ENCODE measurements at regions of chr7 and their contacts with region 1.

Region 1: GRCh38 chr7:90430614-90431471 is 27.6 kb downstream of the CLDN12 start:
- DNase-seq: no peak
- ATAC-seq: no peak
- H3K4me3 ChIP-seq: no peak overlapping the region
- H3K27ac ChIP-seq: no peak overlapping the region
- H3K4me1 ChIP-seq: no peaks in the 10 kb centered on the region
- H3K27me3 ChIP-seq: no peaks in the 10 kb centered on the region
- CTCF ChIP-seq: no peak
- POLR2A ChIP-seq: no peak

Region 2: GRCh38 chr7:88789480-88790064 is 1641.3 kb before region 1 on chr7:
- intact Hi-C with region 1: loop called in 1 of 10 experiments (anchors 10 kb)
- DNase-seq: no peak
- ATAC-seq: no peak
- H3K4me3 ChIP-seq: no peak overlapping the region
- H3K27ac ChIP-seq: no peak overlapping the region
- H3K4me1 ChIP-seq: no peaks in the 10 kb centered on the region
- H3K27me3 ChIP-seq: no peaks in the 10 kb centered on the region
- CTCF ChIP-seq: peak in 11 of 12 donors; percentile 27 to 60 (median 44)
- POLR2A ChIP-seq: no peak

Region 3: DNA sequence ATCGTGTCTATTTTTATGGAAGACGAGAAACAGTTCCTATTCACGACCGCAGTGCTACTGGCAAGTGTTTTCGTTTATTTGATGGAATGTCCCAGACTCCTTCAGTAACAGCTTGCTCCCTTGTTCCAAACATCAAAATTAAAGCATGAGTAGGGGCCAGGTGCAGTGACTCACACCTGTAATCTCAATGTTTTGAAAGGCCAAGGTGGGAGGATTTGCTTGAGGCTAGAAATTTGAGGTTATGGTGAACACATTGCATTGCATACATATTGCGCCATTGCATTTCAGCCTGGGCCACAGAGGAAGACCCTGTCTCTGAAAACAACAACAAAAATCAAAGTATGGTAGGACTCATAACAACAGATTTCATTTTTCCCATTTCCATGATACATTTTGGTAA is 61.4 kb after region 1 on chr7:
- intact Hi-C with region 1: loop called in 1 of 10 experiments (anchors 10 kb)
- DNase-seq: no peak
- ATAC-seq: no peak
- H3K4me3 ChIP-seq: no peak overlapping the region
- H3K27ac ChIP-seq: no peak overlapping the region
- H3K4me1 ChIP-seq: no peaks in the 10 kb centered on the region
- H3K27me3 ChIP-seq: no peaks in the 10 kb centered on the region
- CTCF ChIP-seq: no peak
- POLR2A ChIP-seq: no peak

Measured in heart left ventricle (tissue), 16 donors.